Sciatic nerve (tissue), 2 donors: ENCODE measurements at regions of chr3 and their contacts with region 1.

Region 1: DNA sequence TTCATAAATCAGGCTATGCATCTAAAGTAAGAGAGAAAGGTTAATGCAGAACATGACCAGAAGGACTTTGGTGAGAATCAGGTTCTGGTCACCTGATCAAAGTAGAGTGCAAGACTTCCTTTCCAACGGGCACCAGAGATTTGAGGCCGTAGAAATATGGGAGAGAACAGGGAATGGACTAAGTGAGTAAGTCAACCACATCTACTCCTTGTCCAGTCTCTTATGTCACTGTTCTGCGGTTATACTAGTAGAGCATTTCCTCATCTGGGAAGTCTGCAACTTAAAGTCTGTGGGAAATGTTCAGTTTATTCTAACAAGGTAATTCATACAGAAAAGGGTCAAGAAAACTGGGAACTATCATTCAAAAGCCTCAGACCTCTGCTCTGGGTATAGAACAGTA is 232.8 kb downstream of the CPNE4 start:
- DNase-seq: no peak
- ATAC-seq: no peak

Region 2: DNA sequence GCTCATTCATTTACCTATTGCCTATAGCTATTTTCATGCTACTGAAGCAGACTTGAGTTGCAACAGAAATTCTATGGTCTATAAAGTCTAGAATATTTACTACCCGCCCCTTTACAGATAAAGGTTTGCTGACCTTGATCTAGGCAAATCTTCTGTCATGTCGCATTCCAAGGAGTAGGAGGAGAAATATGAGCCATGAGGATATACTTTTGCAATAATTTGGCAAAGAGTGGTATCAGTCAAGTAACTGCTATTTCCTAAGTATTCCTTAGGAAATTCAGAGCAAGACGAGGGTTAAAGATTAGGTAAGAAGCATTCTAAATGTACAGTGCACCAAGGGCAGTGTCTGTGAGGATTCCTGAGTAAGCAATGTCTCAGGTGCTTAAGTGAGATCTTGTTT is 541.5 kb before region 1 on chr3:
- intact Hi-C with region 1: loop called (anchors 2 kb)
- DNase-seq: no peak
- ATAC-seq: no peak

Region 3: DNA sequence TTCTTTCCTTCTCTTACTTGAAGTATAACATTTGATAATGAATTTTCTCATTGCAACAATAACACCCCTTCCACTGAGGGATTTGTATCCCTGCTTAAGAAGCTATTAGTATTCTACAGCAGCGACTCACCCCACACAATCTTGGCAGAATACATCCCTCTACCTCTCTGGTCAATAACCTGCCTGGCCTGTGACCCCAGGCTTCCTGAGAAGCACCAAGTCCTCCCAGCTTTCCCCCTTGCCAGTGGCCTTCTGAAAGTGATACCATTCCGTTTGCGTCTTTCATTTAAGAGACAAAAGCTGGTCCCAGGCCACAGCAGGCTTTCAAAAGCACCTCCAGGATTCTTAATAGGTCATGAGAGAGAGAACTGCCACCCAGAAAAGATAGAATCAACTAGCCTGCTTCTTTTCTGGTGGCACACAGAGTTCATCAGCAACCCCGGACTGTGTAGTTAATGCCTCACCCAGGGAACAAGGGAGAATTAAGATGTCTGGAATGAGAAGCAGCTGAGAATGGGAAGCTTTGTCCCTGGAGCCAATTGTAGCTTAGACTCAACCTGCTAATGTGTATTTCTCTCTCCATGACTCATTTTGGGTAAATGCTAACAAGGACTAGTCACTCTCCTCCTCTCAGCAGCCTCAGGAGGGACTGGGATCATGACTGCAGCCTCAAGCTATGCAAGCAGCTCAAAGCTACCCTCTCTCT is 333.8 kb after region 1 on chr3:
- intact Hi-C with region 1: no loop called
- DNase-seq: no peak
- ATAC-seq: no peak